ENCODE measurements at regions of chr17 and their contacts with region 1.

Region 1: DNA sequence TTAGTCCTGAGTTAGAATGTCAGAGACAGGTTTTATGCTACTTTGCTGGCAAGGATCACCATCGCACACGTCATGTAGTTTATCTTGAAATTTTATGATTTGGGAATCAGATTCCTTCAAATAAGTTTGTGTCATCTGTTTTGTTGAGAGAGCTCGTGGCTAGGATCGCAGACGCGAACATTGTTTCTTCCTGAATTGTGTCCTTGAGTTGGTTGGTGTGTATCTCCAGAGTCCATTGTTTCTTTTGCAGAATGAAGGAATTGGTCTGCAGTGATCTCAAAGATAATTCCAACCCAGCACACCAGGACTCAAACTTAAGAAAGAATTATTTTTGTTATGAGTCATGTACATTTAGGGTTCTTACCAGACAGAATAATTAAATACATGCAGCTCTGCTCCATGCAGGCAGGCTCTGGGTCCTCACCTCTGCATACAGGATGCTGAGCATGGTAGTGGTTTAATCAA is 51.6 kb downstream of the PRKCA start:
- DNase-seq: no peak
- H3K4me3 ChIP-seq: no peak overlapping the region
- H3K27ac ChIP-seq: no peak overlapping the region
- H3K4me1 ChIP-seq: peaks cover 7% of the 10 kb centered on the region
- H3K27me3 ChIP-seq: no peaks in the 10 kb centered on the region
- CTCF ChIP-seq: no peak

Region 2: GRCh38 chr17:66426397-66427033 is 72.5 kb after region 1 on chr17:
- CTCF ChIA-PET with region 1: no interaction called
- POLR2A ChIA-PET with region 1: interaction called, 14 read pairs
- intact Hi-C with region 1: no loop called
- DNase-seq: no peak
- H3K4me3 ChIP-seq: no peak overlapping the region
- H3K27ac ChIP-seq: no peak overlapping the region
- H3K4me1 ChIP-seq: 0 out of 2 replicates have a peak, but pooled peaks cover 2% of the 10 kb centered on the region
- H3K27me3 ChIP-seq: no peaks in the 10 kb centered on the region
- CTCF ChIP-seq: peak; percentile 29; the same call in 1 of the 2 replicates